ENCODE measurements at regions of chr15 and their contacts with region 1.

Region 1: GRCh38 chr15:68730471-68730919 is 90.2 kb downstream of the ANP32A start:
- DNase-seq: no peak
- ATAC-seq: peak; percentile 64
- H3K4me3 ChIP-seq: no peak overlapping the region
- H3K27ac ChIP-seq: no peak overlapping the region
- H3K4me1 ChIP-seq: peaks cover 0 to 2% of the 10 kb centered on the region in 2 donors
- H3K27me3 ChIP-seq: no peaks in the 10 kb centered on the region

Region 2: DNA sequence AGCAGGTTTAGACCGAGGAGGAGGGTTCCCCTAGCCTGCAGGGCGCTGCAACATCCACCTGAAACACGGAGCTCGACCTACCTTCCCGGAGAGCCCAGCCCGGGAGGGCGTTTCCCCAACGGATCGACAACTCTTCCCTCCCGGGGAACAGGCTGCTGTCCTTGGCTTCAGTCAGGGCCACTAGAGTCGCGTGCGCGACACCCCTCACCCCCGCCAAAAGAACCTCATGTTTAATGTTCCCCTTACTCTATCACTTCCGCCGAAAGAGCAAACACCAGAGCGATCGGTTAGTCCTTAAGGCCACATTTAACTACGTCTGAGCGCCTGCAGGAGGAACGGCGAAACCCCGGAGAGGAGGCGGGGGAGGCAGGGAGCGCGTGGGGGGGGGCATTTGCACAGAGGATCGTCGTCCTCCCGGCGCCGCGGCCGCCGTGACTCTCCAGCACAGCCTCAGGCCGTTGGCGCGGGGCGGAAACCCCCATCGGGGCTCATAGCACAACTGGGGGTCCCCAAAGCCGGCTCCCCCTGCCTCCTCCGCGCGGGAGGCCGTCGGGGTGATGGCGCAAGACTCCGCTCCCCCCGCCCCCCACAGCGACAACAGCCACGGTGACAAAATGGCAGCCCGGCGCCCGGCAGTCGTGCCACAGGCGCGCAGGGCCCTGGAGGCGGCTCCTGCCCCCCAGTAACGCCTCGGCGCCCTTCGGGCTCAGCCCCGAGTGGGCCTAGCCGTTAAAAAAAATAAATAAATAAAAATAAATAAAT is 87.0 kb after region 1 on chr15:
- intact Hi-C with region 1: loop called in 1 of 2 experiments (anchors 5 kb)
- DNase-seq: peak; percentile 73 to 86
- ATAC-seq: peak; percentile 60
- H3K4me3 ChIP-seq: peak overlapping the region; percentile 67 to 86
- H3K27ac ChIP-seq: peak overlapping the region; percentile 43 to 44
- H3K4me1 ChIP-seq: no peaks in the 10 kb centered on the region
- H3K27me3 ChIP-seq: no peaks in the 10 kb centered on the region

Region 3: GRCh38 chr15:68852461-68852860 is 122.0 kb after region 1 on chr15:
- intact Hi-C with region 1: no loop called
- DNase-seq: no peak
- ATAC-seq: no peak
- H3K4me3 ChIP-seq: no peak overlapping the region
- H3K27ac ChIP-seq: no peak overlapping the region
- H3K4me1 ChIP-seq: no peaks in the 10 kb centered on the region
- H3K27me3 ChIP-seq: no peaks in the 10 kb centered on the region